K562 (cell line): ENCODE measurements at regions of chr1 and their contacts with region 1.

Region 1: GRCh38 chr1:108570128-108570527 is 10.2 kb downstream of the EEIG2 start:
- DNase-seq: peak in 2 of 4 experiments; percentile 63 to 66
- ATAC-seq: peak; percentile 99
- H3K4me3 ChIP-seq: no peak overlapping the region
- H3K27ac ChIP-seq: no peak overlapping the region
- H3K4me1 ChIP-seq: peaks cover 0 to 17% of the 10 kb centered on the region in 2 experiments; a peak in 2 of 5 replicates
- H3K27me3 ChIP-seq: no peaks in the 10 kb centered on the region
- CTCF ChIP-seq: peak; percentile 67 to 74 (median 71)
- EP300 ChIP-seq: no peak
- POLR2A ChIP-seq: no peak
- RAD21 ChIP-seq: peak; percentile 56 to 81

Region 2: DNA sequence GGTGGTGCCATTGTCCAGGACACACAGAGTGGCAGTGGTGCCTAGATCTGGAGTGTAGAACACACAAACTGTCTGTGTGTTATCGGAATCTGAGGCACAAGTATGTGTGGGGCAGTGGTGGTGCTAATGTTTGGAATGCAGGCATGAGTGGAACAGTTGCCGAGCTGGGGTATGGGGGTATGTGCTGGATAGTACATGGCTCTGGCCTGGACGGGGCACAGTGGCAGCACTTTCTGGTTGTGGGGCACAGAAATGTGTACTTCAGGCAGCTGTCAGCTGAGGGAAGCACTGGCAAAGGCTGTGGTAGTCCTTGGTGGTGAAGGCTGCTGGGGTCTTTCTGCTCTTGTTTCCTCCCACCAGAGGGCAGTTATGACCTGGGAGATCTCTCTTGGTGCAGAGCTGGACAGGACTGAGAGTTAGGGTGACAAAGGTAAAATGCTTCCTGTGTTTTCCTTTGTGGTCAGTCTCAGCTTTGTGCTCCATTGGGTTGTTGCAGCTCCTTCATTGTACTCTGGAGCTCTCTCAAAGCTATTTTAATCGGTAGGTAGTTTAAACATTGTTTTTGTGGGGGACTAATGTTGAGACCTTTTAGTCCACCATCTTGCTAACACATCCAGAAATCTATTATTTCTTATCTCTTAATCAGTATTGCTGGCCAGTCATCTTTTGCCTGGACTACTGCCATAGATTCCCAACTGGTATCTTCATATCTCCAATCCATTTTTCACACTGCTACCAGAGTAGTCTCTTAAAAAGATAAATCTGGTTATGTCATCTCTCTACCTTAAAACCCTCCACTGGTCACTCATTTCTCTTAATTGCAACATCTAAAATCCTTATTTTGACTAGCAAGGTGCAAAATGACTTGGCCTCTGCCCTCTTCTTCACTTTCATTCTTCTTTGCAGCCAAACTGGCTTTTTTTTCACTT is 242.3 kb before region 1 on chr1:
- CTCF ChIA-PET with region 1: no interaction called
- POLR2A ChIA-PET with region 1: no interaction called
- in situ Hi-C with region 1: no loop called
- intact Hi-C with region 1: loop called (anchors 1 kb)
- DNase-seq: peak in 2 of 4 experiments; percentile 37 to 70
- ATAC-seq: peak; percentile 95
- H3K4me3 ChIP-seq: no peak overlapping the region
- H3K27ac ChIP-seq: no peak overlapping the region; the same call in 2 of the 3 replicates
- H3K4me1 ChIP-seq: peaks cover 3 to 20% of the 10 kb centered on the region in 2 experiments; a peak in 4 of 5 replicates
- H3K27me3 ChIP-seq: no peaks in the 10 kb centered on the region
- CTCF ChIP-seq: peak; percentile 68 to 78 (median 72)
- EP300 ChIP-seq: 0 out of 2 replicates have a peak, but pooled peaks have one; percentile 2
- POLR2A ChIP-seq: 0 out of 2 replicates have a peak, but pooled peaks have one; percentile 6
- RAD21 ChIP-seq: peak; percentile 44 to 84

Region 3: DNA sequence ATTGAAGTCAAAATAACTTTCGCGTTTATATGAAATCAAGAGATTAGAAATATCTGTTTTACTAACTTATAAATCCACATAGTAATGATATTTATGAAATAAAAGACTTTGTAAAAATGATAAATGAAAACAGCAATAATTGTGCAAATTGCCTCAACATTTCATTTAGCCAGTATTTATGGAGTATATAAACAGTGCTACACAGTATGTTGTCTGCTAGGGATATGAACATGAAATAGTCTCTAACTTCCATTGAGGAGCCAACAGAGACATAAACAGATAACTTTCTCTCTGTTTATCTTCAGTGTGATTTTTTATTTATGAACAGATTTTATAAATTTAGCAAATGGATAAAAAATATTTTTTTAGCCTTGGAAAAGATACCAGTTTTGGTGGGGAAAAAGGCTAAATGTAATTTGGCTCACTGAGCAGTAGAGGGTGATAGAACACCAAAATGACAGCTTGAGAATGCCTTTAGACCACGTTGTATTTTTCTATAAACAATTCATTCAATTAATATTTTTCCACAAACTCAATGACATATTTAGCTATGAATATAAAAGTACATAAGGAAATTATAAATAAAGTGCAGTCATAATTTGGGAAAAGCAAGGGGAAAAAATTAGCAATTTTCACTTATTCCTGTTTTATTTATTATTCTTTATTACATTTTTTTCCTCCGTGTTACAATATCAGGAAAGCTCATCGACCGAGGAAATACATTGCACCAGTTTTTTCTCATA is 57.7 kb before region 1 on chr1:
- CTCF ChIA-PET with region 1: interaction called, 9 read pairs
- POLR2A ChIA-PET with region 1: no interaction called
- in situ Hi-C with region 1: no loop called
- intact Hi-C with region 1: loop called (anchors 2 kb)
- DNase-seq: peak; percentile 31 to 68 (median 48)
- ATAC-seq: peak; percentile 87
- H3K4me3 ChIP-seq: no peak overlapping the region
- H3K27ac ChIP-seq: no peak overlapping the region
- H3K4me1 ChIP-seq: no peaks in the 10 kb centered on the region
- H3K27me3 ChIP-seq: no peaks in the 10 kb centered on the region
- CTCF ChIP-seq: peak; percentile 77 to 99 (median 81)
- EP300 ChIP-seq: no peak
- POLR2A ChIP-seq: no peak
- RAD21 ChIP-seq: peak; percentile 100